ENCODE measurements at regions of chr19 and their contacts with region 1.

Region 1: DNA sequence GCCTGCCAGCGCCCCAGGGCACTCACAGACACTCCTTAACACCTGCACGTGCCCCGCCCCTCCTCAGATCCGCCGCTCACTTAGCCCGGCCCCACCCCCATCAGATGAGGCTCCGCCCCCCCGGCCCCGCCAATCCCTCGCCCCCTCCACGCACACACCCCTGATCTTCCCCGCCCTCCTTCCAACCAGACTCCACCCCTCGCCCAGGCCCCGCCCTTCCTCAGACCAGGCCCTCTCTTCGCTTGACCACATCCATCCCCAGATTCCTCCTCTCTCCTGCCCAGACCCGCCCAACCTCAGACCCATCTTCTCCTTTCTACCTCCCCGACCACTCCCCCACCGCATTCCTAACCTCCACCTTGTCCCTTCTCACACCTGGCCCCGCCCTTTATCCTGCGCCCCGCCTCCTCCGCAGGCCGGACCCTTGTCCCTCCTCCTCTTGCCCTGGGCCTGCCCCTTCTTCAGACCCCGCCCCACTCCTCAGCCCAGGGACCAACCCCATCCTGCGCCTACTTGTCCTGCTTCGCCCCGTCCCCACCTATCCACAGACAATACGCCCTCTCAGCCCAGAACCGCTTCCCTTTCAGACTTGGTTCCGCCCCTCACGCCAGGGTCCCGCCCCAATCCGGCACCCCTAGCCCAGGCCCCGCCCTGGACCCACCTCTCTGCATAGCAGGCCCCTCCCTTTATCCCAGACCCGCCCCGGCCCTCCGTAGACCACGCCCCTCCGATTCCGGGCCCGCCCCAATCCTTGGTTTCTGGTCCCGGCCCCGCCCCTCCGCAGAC is 452 bp upstream of the KLHL26 start:
- DNase-seq: peak; percentile 98
- H3K4me3 ChIP-seq: peak overlapping the region; percentile 99
- H3K27ac ChIP-seq: peak overlapping the region; percentile 94
- H3K4me1 ChIP-seq: peaks cover 13% of the 10 kb centered on the region
- H3K27me3 ChIP-seq: no peaks in the 10 kb centered on the region
- CTCF ChIP-seq: no peak

Region 2: GRCh38 chr19:18649371-18650020 is 13.1 kb after region 1 on chr19:
- CTCF ChIA-PET with region 1: no interaction called
- POLR2A ChIA-PET with region 1: no interaction called
- intact Hi-C with region 1: no loop called
- DNase-seq: no peak
- H3K4me3 ChIP-seq: no peak overlapping the region
- H3K27ac ChIP-seq: no peak overlapping the region
- H3K4me1 ChIP-seq: no peaks in the 10 kb centered on the region
- H3K27me3 ChIP-seq: no peaks in the 10 kb centered on the region
- CTCF ChIP-seq: no peak

Region 3: GRCh38 chr19:18951665-18952281 is 315.4 kb after region 1 on chr19:
- CTCF ChIA-PET with region 1: no interaction called
- POLR2A ChIA-PET with region 1: interaction called, 14 read pairs
- intact Hi-C with region 1: no loop called
- DNase-seq: no peak
- H3K4me3 ChIP-seq: no peak overlapping the region
- H3K27ac ChIP-seq: no peak overlapping the region
- H3K4me1 ChIP-seq: no peaks in the 10 kb centered on the region
- H3K27me3 ChIP-seq: no peaks in the 10 kb centered on the region
- CTCF ChIP-seq: no peak

Measured in A673 (cell line).